Activated CD8-positive, alpha-beta T cell treated with anti-CD3 and anti-CD28 coated beads, Interleukin-2, amount 10 ng/mL, durations not matched to agents 7 days and 5 days (primary cell): ENCODE measurements at regions of chr4 and their contacts with region 1.

Region 1: GRCh38 chr4:48085821-48086607 is 48.0 kb downstream of the TXK start:
- DNase-seq: no peak
- ATAC-seq: no peak
- H3K4me3 Mint-ChIP-seq: no peak overlapping the region
- H3K27ac Mint-ChIP-seq: no peak overlapping the region
- H3K4me1 Mint-ChIP-seq: peaks cover 3% of the 10 kb centered on the region
- H3K27me3 Mint-ChIP-seq: no peaks in the 10 kb centered on the region

Region 2: DNA sequence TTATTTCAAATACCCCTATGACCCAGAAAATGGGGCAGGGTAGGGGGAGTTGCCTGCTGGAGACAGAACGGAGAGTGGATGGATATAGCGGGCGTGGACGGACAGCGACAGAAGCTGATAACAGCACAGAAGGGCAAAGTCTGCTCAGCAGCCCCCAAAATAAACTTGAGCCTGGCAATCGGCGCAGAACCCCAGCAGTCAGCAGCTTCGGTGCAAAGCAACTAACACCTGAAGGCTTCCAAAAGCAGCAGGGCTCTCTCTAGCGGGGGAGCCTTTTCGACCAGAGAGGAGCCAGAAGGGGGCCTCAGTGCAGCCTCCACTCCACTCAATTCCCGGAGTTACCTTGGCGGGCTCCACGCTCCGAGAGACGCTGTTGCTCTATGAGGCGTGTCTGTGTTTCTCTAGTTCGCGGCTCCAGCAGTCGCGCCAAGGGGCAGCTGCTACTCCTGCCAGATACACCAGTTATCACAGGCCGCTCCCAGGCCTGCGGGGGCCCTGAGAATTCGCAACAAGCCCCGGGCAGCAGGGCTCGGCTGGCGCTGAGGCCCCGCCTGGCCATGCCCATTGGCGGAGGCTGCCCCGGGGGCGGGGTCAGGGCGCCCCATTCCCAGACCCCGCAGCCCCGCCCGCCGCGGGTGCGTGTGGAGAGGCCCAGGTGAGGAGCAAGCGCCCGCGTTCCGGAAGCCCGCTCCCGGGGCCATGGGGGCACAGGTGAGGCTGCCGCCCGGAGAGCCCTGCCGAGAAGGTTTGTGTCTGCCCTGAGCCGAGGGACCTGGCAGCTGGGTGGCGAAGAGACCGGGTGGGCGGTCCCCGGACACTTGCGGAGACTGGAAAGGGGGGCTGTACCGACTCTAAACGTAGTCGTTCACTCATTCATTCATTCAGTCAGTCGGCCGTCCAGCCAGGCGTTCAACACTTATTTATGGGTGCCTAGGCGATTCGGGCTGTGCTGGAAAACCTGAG is 69.6 kb before region 1 on chr4 and contains the starts of genes CNGA1 and NIPAL1:
- CTCF ChIA-PET with region 1: interaction called, 13 read pairs
- POLR2A ChIA-PET with region 1: no interaction called
- DNase-seq: peak; percentile 66
- ATAC-seq: peak; percentile 95
- H3K4me3 Mint-ChIP-seq: peak within 1 kb of the TSS; percentile 76
- H3K27ac Mint-ChIP-seq: no peak within 1 kb of the TSS
- H3K4me1 Mint-ChIP-seq: peaks cover 9% of the 10 kb centered on the region
- H3K27me3 Mint-ChIP-seq: peaks cover 21% of the 10 kb centered on the region
- total RNA-seq, gene CNGA1: not detected
- total RNA-seq, gene NIPAL1: 1.1 TPM

Region 3: GRCh38 chr4:48109413-48110263 is 23.6 kb after region 1 on chr4:
- CTCF ChIA-PET with region 1: interaction called, 12 read pairs
- POLR2A ChIA-PET with region 1: no interaction called
- DNase-seq: peak; percentile 57
- ATAC-seq: peak; percentile 73
- H3K4me3 Mint-ChIP-seq: no peak overlapping the region
- H3K27ac Mint-ChIP-seq: no peak overlapping the region
- H3K4me1 Mint-ChIP-seq: peaks cover 43% of the 10 kb centered on the region
- H3K27me3 Mint-ChIP-seq: no peaks in the 10 kb centered on the region

Region 4: GRCh38 chr4:48180234-48180633 is 94.2 kb after region 1 on chr4:
- CTCF ChIA-PET with region 1: no interaction called
- POLR2A ChIA-PET with region 1: no interaction called
- DNase-seq: no peak
- ATAC-seq: no peak
- H3K4me3 Mint-ChIP-seq: no peak overlapping the region
- H3K27ac Mint-ChIP-seq: no peak overlapping the region
- H3K4me1 Mint-ChIP-seq: peaks cover 12% of the 10 kb centered on the region
- H3K27me3 Mint-ChIP-seq: no peaks in the 10 kb centered on the region